PC-3 (cell line): ENCODE measurements at regions of chr1 and their contacts with region 1.

Region 1: GRCh38 chr1:43836267-43836951 is 97.2 kb upstream of the ARTN start:
- DNase-seq: peak; percentile 90
- ATAC-seq: peak; percentile 20
- H3K4me3 ChIP-seq: no peak overlapping the region
- H3K27ac ChIP-seq: peak overlapping the region; percentile 97
- H3K4me1 ChIP-seq: peaks cover 58% of the 10 kb centered on the region
- H3K27me3 ChIP-seq: no peaks in the 10 kb centered on the region
- CTCF ChIP-seq: no peak

Region 2: DNA sequence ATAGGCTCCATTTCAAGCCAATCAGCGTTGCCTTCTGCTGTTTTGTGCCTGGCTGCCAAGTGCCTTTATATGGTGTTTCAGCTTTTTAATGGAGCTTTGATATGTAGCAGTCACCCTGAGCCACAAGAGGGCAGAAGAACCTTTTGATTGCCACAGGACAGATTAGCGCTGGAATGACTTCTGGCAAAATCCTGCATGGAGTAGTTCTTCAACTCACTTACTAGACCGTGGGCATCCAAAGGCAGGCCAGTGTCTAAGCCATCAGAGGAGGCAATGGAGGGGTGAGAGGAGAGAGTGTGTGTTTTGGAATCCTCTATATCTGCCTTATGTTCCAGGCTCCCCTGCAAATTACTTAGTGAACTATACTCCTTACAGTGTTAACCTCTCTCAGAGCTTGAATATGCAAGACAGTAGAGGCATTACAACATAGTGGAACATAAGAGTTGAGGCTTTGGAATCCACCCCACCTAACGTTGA is 72.9 kb before region 1 on chr1:
- CTCF ChIA-PET with region 1: no interaction called
- POLR2A ChIA-PET with region 1: no interaction called
- intact Hi-C with region 1: no loop called
- DNase-seq: peak; percentile 93
- ATAC-seq: peak; percentile 99
- H3K4me3 ChIP-seq: no peak overlapping the region
- H3K27ac ChIP-seq: no peak overlapping the region
- H3K4me1 ChIP-seq: peaks cover 8% of the 10 kb centered on the region; the same call in 1 of the 2 replicates
- H3K27me3 ChIP-seq: no peaks in the 10 kb centered on the region
- CTCF ChIP-seq: peak; percentile 95

Region 3: GRCh38 chr1:43783671-43784205 is 52.7 kb before region 1 on chr1:
- CTCF ChIA-PET with region 1: no interaction called
- POLR2A ChIA-PET with region 1: no interaction called
- intact Hi-C with region 1: loop called (anchors 2 kb)
- DNase-seq: peak; percentile 94
- ATAC-seq: peak; percentile 87
- H3K4me3 ChIP-seq: peak overlapping the region; percentile 4; the same call in 1 of the 2 replicates
- H3K27ac ChIP-seq: peak overlapping the region; percentile 90
- H3K4me1 ChIP-seq: peaks cover 19% of the 10 kb centered on the region
- H3K27me3 ChIP-seq: no peaks in the 10 kb centered on the region
- CTCF ChIP-seq: no peak

Region 4: GRCh38 chr1:43822040-43822439 is 14.4 kb before region 1 on chr1:
- CTCF ChIA-PET with region 1: no interaction called
- POLR2A ChIA-PET with region 1: no interaction called
- intact Hi-C with region 1: no loop called
- DNase-seq: peak; percentile 95
- ATAC-seq: peak; percentile 94
- H3K4me3 ChIP-seq: peak overlapping the region; percentile 47
- H3K27ac ChIP-seq: peak overlapping the region; percentile 83
- H3K4me1 ChIP-seq: peaks cover 53% of the 10 kb centered on the region
- H3K27me3 ChIP-seq: no peaks in the 10 kb centered on the region
- CTCF ChIP-seq: no peak

Region 5: GRCh38 chr1:43879414-43879813 is 43.0 kb after region 1 on chr1:
- CTCF ChIA-PET with region 1: no interaction called
- POLR2A ChIA-PET with region 1: no interaction called
- intact Hi-C with region 1: loop called (anchors 5 kb)
- DNase-seq: peak; percentile 92
- ATAC-seq: peak; percentile 83
- H3K4me3 ChIP-seq: no peak overlapping the region
- H3K27ac ChIP-seq: peak overlapping the region; percentile 75
- H3K4me1 ChIP-seq: peaks cover 27% of the 10 kb centered on the region
- H3K27me3 ChIP-seq: no peaks in the 10 kb centered on the region
- CTCF ChIP-seq: no peak